ENCODE measurements at regions of chr12 and their contacts with region 1.

Region 1: GRCh38 chr12:68610370-68611093 is at the start of gene RAP1B:
- DNase-seq: peak; percentile 85 to 88 (median 88)
- H3K4me3 ChIP-seq: peak within 1 kb of the TSS; percentile 90 to 99 (median 96)
- H3K4me3 Mint-ChIP-seq: peak within 1 kb of the TSS; percentile 92 to 93
- H3K27ac ChIP-seq: peak within 1 kb of the TSS; percentile 97 to 99
- H3K27ac Mint-ChIP-seq: peak within 1 kb of the TSS; percentile 96 to 98 (median 98)
- H3K4me1 ChIP-seq: peaks cover 30 to 41% of the 10 kb centered on the region in 2 donors
- H3K4me1 Mint-ChIP-seq: peaks cover 44% of the 10 kb centered on the region
- H3K27me3 ChIP-seq: no peaks in the 10 kb centered on the region
- H3K27me3 Mint-ChIP-seq: peaks cover 0 to 3% (median 1%) of the 10 kb centered on the region in 3 donors
- CTCF ChIP-seq: no peak
- polyA plus RNA-seq, gene RAP1B: 153 to 543 (median 461) TPM

Region 2: DNA sequence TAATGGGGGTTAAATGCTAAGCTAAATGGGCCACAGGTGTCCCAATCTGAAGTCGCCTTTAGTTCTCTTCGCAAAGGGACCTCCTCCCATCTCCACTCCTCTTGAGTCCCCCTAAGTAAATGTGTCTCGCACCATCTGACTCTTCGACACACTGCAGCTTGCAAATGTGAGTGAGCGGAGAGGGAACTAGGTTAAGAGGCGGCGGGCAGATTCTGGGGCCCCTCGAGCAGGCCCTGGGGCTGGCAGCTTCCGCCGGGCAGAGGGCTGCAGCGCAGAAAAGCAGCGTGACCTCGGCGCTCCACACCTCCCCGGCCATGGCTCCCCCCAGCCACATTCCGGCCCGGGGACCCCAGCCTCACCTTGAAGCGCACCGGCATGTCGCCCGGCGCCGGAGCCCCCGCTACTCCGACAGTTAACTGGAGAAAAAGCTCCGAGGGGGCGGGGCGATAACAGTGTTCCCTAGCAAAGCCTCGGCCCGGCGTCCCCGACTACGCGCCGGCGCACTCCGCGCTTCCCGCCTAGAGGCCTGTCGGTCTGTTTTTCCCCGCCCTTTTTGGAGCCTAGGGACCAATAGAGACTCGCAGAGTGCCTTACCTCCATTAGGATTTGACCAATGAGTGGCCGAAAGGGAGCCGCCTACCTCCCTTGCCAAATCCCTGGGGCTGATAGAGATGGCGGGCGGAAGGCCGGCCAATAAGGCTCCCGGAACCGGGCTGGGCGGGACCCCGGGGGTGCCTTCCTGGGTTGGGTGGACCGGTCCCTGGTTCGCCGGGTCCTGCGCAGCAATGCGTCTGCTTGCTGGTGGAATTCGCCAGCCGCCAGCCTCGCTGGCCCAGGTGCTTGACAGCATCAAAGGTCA is 278.4 kb before region 1 on chr12 and contains the start of gene MDM1:
- intact Hi-C with region 1: loop called (anchors 5 kb)
- DNase-seq: peak; percentile 96 to 99 (median 96)
- H3K4me3 ChIP-seq: peak within 1 kb of the TSS; percentile 62 to 82 (median 78)
- H3K4me3 Mint-ChIP-seq: peak within 1 kb of the TSS; percentile 82 to 93
- H3K27ac ChIP-seq: peak within 1 kb of the TSS; percentile 58 to 75
- H3K27ac Mint-ChIP-seq: peak within 1 kb of the TSS; percentile 84 to 93 (median 88)
- H3K4me1 ChIP-seq: peaks cover 23 to 26% of the 10 kb centered on the region in 2 donors
- H3K4me1 Mint-ChIP-seq: peaks cover 42% of the 10 kb centered on the region
- H3K27me3 ChIP-seq: no peaks in the 10 kb centered on the region
- H3K27me3 Mint-ChIP-seq: no peaks in the 10 kb centered on the region
- CTCF ChIP-seq: no peak
- polyA plus RNA-seq, gene MDM1: 6.7 to 10.9 (median 10.3) TPM

Region 3: GRCh38 chr12:68358532-68359485 is 251.7 kb before region 1 on chr12:
- intact Hi-C with region 1: loop called in 1 of 2 experiments (anchors 2 kb)
- DNase-seq: peak; percentile 79 to 93 (median 85)
- H3K4me3 ChIP-seq: peak overlapping the region in 1 of 3 experiments; percentile 36
- H3K4me3 Mint-ChIP-seq: peak overlapping the region; percentile 7 to 61
- H3K27ac ChIP-seq: peak overlapping the region; percentile 81 to 99
- H3K27ac Mint-ChIP-seq: peak overlapping the region; percentile 98 to 100 (median 99)
- H3K4me1 ChIP-seq: peaks cover 50 to 69% of the 10 kb centered on the region in 2 donors
- H3K4me1 Mint-ChIP-seq: peaks cover 50% of the 10 kb centered on the region
- H3K27me3 ChIP-seq: no peaks in the 10 kb centered on the region
- H3K27me3 Mint-ChIP-seq: no peaks in the 10 kb centered on the region
- CTCF ChIP-seq: peak; percentile 63

Region 4: DNA sequence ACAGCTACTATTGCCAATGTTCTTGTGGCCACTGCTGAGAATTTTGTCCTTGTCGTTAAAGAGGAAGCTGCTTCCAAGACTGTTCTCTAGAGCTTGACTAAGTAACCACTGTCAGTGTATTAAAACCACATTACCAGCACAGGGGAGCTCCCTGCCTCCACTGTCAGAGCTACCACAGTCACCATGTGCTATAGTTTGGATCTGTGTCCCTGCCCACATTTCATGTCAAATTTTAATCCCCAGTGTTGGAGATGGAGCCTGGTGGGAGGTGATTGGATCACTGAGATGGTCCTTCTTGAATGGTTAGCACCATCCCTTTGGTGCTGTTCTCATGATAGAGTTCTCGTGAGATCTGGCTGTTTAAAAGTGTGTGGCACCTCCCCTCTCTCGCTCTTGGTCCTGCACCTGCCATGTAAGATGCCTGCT is 23.1 kb before region 1 on chr12:
- intact Hi-C with region 1: no loop called
- DNase-seq: peak; percentile 12 to 33 (median 13)
- H3K4me3 ChIP-seq: no peak overlapping the region
- H3K4me3 Mint-ChIP-seq: no peak overlapping the region
- H3K27ac ChIP-seq: no peak overlapping the region
- H3K27ac Mint-ChIP-seq: peak overlapping the region in 5 of 7 donors; percentile 25 to 46 (median 38)
- H3K4me1 ChIP-seq: no peaks in the 10 kb centered on the region
- H3K4me1 Mint-ChIP-seq: peaks cover 10% of the 10 kb centered on the region
- H3K27me3 ChIP-seq: no peaks in the 10 kb centered on the region
- H3K27me3 Mint-ChIP-seq: no peaks in the 10 kb centered on the region
- CTCF ChIP-seq: no peak

Measured in CD14-positive monocyte (primary cell).